Mucosa of descending colon (tissue), 3 donors: ENCODE measurements at regions of chr5 and their contacts with region 1.

Region 1: GRCh38 chr5:36690041-36690961 is 83.9 kb downstream of the SLC1A3 start:
- DNase-seq: peak; percentile 76 to 83 (median 83)
- ATAC-seq: peak; percentile 94
- H3K4me3 ChIP-seq: no peak overlapping the region
- H3K4me1 ChIP-seq: peaks cover 10% of the 10 kb centered on the region
- CTCF ChIP-seq: peak; percentile 49

Region 2: GRCh38 chr5:36414869-36415282 is 275.4 kb before region 1 on chr5:
- intact Hi-C with region 1: loop called in 1 of 2 experiments (anchors 10 kb)
- DNase-seq: no peak
- ATAC-seq: peak; percentile 69
- H3K4me3 ChIP-seq: no peak overlapping the region
- H3K4me1 ChIP-seq: no peaks in the 10 kb centered on the region
- CTCF ChIP-seq: peak; percentile 12

Region 3: DNA sequence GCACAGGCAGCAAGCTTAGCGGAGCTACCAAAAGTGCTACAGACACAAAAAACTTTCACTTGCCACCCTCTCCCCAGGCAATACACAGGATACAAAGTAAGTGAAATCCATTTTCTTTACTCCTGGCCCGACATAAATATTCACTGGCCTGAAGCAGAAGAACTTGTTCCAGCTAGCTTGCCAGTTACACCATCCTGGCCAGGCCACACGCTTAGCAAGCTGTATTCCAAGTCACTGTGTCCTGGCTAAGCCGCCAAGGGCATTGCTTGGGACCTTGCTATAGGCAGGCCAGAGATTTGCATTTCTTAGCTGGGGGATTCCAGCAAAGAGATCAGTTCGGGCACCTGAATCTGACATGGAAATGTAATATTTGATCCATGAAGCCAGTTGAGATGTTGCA is 154.9 kb before region 1 on chr5:
- intact Hi-C with region 1: no loop called
- DNase-seq: no peak
- ATAC-seq: no peak
- H3K4me3 ChIP-seq: no peak overlapping the region
- H3K4me1 ChIP-seq: no peaks in the 10 kb centered on the region
- CTCF ChIP-seq: no peak

Region 4: GRCh38 chr5:36584009-36584875 is 106.1 kb before region 1 on chr5:
- intact Hi-C with region 1: no loop called
- DNase-seq: no peak
- ATAC-seq: no peak
- H3K4me3 ChIP-seq: no peak overlapping the region
- H3K4me1 ChIP-seq: no peaks in the 10 kb centered on the region
- CTCF ChIP-seq: no peak

Region 5: GRCh38 chr5:36836831-36837230 is 146.5 kb after region 1 on chr5:
- intact Hi-C with region 1: no loop called
- DNase-seq: no peak
- ATAC-seq: no peak
- H3K4me3 ChIP-seq: no peak overlapping the region
- H3K4me1 ChIP-seq: no peaks in the 10 kb centered on the region
- CTCF ChIP-seq: no peak